GM13976 (cell line): ENCODE measurements at regions of chr1 and their contacts with region 1.

Region 1: GRCh38 chr1:66436378-66437145 is 97.4 kb upstream of the SGIP1 start:
- DNase-seq: peak; percentile 32
- CTCF ChIP-seq: peak; percentile 30

Region 2: DNA sequence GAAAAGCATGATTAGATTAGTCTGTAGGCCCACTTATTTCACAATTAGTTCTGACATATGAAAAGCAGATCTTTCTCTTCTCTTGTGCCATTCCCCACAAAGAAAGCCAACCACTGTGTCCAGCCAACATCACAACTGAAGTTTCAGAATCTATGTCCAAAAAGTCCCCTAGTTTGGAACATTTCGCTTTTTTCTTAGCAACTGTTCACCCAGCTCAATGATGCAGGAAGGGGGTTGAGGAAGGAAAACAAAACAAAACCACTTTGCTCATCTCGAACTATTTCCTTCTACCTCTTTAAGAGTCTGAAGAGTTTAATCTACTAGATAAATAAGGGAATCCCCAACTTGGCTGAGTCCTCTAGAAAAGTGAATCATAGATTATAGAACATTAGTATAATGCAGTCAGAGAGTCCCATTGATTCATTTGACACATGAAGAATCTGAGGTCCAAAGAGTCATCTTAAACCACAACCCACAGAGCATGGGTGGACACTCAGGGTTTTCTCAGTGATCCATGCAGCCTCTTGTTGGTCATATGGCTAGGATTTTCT is 61.9 kb before region 1 on chr1:
- in situ Hi-C with region 1: loop called (anchors 10 kb)
- DNase-seq: peak; percentile 36
- CTCF ChIP-seq: no peak

Region 3: GRCh38 chr1:66386712-66387111 is 49.9 kb before region 1 on chr1:
- in situ Hi-C with region 1: no loop called
- DNase-seq: no peak
- CTCF ChIP-seq: no peak

Region 4: DNA sequence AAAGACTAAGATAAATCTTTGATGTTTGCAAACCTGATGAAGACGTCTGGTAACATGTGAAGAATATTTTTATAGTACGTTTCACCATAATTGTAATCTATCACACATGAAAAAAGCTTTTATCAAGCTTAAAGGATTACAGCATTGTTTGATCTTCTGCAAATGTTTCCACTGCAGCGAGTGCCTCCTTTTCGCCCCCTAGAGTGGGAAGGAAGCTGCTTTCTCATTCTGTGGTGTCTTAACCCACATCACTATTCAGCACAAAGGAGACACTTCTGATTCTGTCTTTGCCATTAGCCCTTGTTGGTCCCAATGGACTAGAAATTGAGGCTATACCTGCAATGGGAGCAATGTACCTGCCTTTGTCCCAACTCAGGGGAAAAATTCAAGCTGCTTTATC is 825.1 kb after region 1 on chr1:
- in situ Hi-C with region 1: no loop called
- DNase-seq: no peak
- CTCF ChIP-seq: no peak